H1 (cell line): ENCODE measurements at regions of chr2 and their contacts with region 1.

Region 1: GRCh38 chr2:232292395-232293154 is 86.0 kb upstream of the ALPP start:
- DNase-seq: peak; percentile 46 to 89
- H3K4me3 ChIP-seq: no peak overlapping the region
- H3K27ac ChIP-seq: no peak overlapping the region
- H3K4me1 ChIP-seq: peaks cover 2 to 5% (median 3%) of the 10 kb centered on the region in 4 experiments; a peak in 5 of 7 replicates
- H3K27me3 ChIP-seq: no peaks in the 10 kb centered on the region
- CTCF ChIP-seq: peak; percentile 72 to 95 (median 77)
- EP300 ChIP-seq: no peak
- POLR2A ChIP-seq: no peak
- RAD21 ChIP-seq: peak; percentile 59 to 72

Region 2: GRCh38 chr2:232113821-232114220 is 178.8 kb before region 1 on chr2:
- CTCF ChIA-PET with region 1: interaction called, 17 read pairs
- POLR2A ChIA-PET with region 1: no interaction called
- DNase-seq: no peak
- H3K4me3 ChIP-seq: no peak overlapping the region
- H3K27ac ChIP-seq: no peak overlapping the region
- H3K4me1 ChIP-seq: peaks cover 0 to 2% (median 0%) of the 10 kb centered on the region in 4 experiments; a peak in 3 of 7 replicates
- H3K27me3 ChIP-seq: no peaks in the 10 kb centered on the region
- CTCF ChIP-seq: no peak
- EP300 ChIP-seq: no peak
- POLR2A ChIP-seq: no peak
- RAD21 ChIP-seq: no peak

Region 3: GRCh38 chr2:232230557-232230956 is 62.0 kb before region 1 on chr2:
- CTCF ChIA-PET with region 1: interaction called, 23 read pairs
- POLR2A ChIA-PET with region 1: no interaction called
- DNase-seq: peak; percentile 13 to 74
- H3K4me3 ChIP-seq: no peak overlapping the region
- H3K27ac ChIP-seq: no peak overlapping the region
- H3K4me1 ChIP-seq: peaks cover 5 to 13% (median 8%) of the 10 kb centered on the region in 4 experiments
- H3K27me3 ChIP-seq: no peaks in the 10 kb centered on the region
- CTCF ChIP-seq: peak; percentile 58 to 87 (median 59)
- EP300 ChIP-seq: no peak
- POLR2A ChIP-seq: no peak
- RAD21 ChIP-seq: peak; percentile 74 to 78

Region 4: GRCh38 chr2:232246245-232246644 is 46.3 kb before region 1 on chr2:
- CTCF ChIA-PET with region 1: interaction called, 13 read pairs
- POLR2A ChIA-PET with region 1: no interaction called
- DNase-seq: peak in 1 of 2 experiments; percentile 42
- H3K4me3 ChIP-seq: no peak overlapping the region
- H3K27ac ChIP-seq: no peak overlapping the region
- H3K4me1 ChIP-seq: peaks cover 0 to 3% (median 0%) of the 10 kb centered on the region in 4 experiments; a peak in 1 of 7 replicates
- H3K27me3 ChIP-seq: no peaks in the 10 kb centered on the region
- CTCF ChIP-seq: no peak
- EP300 ChIP-seq: no peak
- POLR2A ChIP-seq: no peak
- RAD21 ChIP-seq: no peak

Region 5: DNA sequence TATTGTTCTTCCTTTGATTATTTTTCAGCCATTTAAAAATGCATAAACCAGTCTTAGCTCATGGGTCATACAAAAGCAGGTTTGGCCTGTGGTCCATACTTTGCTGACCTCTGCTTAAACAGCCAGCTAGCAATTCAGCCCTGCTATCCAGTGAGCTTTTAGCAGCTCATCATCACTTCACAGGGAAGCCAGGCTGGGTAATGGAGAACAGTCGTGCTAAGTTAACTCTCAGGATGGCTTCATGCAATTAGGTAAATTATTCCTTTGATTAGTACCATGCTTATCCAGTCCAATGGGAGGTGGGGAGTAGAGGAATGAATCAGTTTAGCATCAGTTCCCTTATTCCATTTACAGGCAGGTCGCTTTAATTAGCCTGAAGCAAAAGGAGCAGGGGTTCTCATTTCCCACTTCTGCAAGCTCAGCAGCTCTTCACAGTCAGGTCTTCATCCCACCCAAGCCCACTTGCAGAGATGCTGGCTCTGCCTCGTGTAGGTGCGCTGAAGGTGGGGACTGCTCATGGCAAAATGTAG is 23.9 kb before region 1 on chr2:
- CTCF ChIA-PET with region 1: interaction called, 47 read pairs
- POLR2A ChIA-PET with region 1: no interaction called
- DNase-seq: no peak
- H3K4me3 ChIP-seq: no peak overlapping the region
- H3K27ac ChIP-seq: no peak overlapping the region
- H3K4me1 ChIP-seq: peaks cover 0 to 6% (median 0%) of the 10 kb centered on the region in 4 experiments; a peak in 2 of 7 replicates
- H3K27me3 ChIP-seq: no peaks in the 10 kb centered on the region
- CTCF ChIP-seq: no peak
- EP300 ChIP-seq: no peak
- POLR2A ChIP-seq: no peak
- RAD21 ChIP-seq: no peak

Region 6: GRCh38 chr2:232310121-232310520 is 17.5 kb after region 1 on chr2:
- CTCF ChIA-PET with region 1: interaction called, 65 read pairs
- POLR2A ChIA-PET with region 1: no interaction called
- DNase-seq: no peak
- H3K4me3 ChIP-seq: no peak overlapping the region
- H3K27ac ChIP-seq: no peak overlapping the region
- H3K4me1 ChIP-seq: no peaks in the 10 kb centered on the region
- H3K27me3 ChIP-seq: no peaks in the 10 kb centered on the region
- CTCF ChIP-seq: no peak
- EP300 ChIP-seq: no peak
- POLR2A ChIP-seq: no peak
- RAD21 ChIP-seq: no peak

Region 7: GRCh38 chr2:232327105-232328041 is 34.8 kb after region 1 on chr2:
- CTCF ChIA-PET with region 1: interaction called, 34 read pairs
- POLR2A ChIA-PET with region 1: no interaction called
- DNase-seq: peak; percentile 77 to 99
- H3K4me3 ChIP-seq: no peak overlapping the region
- H3K27ac ChIP-seq: no peak overlapping the region
- H3K4me1 ChIP-seq: peaks cover 0 to 18% (median 10%) of the 10 kb centered on the region in 4 experiments; a peak in 6 of 7 replicates
- H3K27me3 ChIP-seq: no peaks in the 10 kb centered on the region
- CTCF ChIP-seq: peak in 2 of 3 experiments; percentile 88 to 90; a peak in 3 of 4 replicates
- EP300 ChIP-seq: no peak
- POLR2A ChIP-seq: no peak
- RAD21 ChIP-seq: peak; percentile 78 to 82